ENCODE measurements at regions of chr7 and their contacts with region 1.

Region 1: GRCh38 chr7:66905689-66906088 is 15.3 kb upstream of the TMEM248 start:
- DNase-seq: peak in 1 of 2 experiments; percentile 56
- H3K4me3 ChIP-seq: no peak overlapping the region
- H3K27ac ChIP-seq: peak overlapping the region; percentile 5; the same call in 1 of the 2 replicates
- H3K4me1 ChIP-seq: no peaks in the 10 kb centered on the region
- H3K27me3 ChIP-seq: no peaks in the 10 kb centered on the region
- CTCF ChIP-seq: peak; percentile 45 to 68 (median 59)
- EP300 ChIP-seq: no peak
- POLR2A ChIP-seq: no peak
- RAD21 ChIP-seq: peak; percentile 49 to 51

Region 2: DNA sequence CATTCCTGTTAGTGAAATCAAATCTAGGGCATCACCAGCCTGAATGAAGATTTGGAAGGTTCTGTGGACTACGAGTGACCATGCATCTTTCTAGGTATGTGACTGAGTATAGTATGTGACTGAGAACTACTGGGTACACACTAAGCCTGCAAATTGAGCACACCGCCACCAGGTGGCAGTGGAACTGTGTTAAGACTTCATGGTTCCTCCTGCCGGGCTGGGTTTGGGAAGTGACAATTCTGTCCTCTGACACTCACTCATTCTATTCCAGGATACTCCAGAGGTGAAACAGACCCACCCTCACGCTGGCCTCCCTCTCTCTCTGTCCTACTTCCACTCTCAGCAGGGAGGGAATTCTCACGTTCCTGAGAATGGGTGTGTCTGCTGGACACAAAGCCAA is 68.7 kb before region 1 on chr7:
- CTCF ChIA-PET with region 1: interaction called, 55 read pairs
- POLR2A ChIA-PET with region 1: no interaction called
- DNase-seq: peak; percentile 50 to 79
- H3K4me3 ChIP-seq: no peak overlapping the region
- H3K27ac ChIP-seq: no peak overlapping the region
- H3K4me1 ChIP-seq: no peaks in the 10 kb centered on the region
- H3K27me3 ChIP-seq: no peaks in the 10 kb centered on the region
- CTCF ChIP-seq: peak; percentile 64 to 84 (median 72)
- EP300 ChIP-seq: no peak
- POLR2A ChIP-seq: no peak
- RAD21 ChIP-seq: peak; percentile 81 to 82

Region 3: DNA sequence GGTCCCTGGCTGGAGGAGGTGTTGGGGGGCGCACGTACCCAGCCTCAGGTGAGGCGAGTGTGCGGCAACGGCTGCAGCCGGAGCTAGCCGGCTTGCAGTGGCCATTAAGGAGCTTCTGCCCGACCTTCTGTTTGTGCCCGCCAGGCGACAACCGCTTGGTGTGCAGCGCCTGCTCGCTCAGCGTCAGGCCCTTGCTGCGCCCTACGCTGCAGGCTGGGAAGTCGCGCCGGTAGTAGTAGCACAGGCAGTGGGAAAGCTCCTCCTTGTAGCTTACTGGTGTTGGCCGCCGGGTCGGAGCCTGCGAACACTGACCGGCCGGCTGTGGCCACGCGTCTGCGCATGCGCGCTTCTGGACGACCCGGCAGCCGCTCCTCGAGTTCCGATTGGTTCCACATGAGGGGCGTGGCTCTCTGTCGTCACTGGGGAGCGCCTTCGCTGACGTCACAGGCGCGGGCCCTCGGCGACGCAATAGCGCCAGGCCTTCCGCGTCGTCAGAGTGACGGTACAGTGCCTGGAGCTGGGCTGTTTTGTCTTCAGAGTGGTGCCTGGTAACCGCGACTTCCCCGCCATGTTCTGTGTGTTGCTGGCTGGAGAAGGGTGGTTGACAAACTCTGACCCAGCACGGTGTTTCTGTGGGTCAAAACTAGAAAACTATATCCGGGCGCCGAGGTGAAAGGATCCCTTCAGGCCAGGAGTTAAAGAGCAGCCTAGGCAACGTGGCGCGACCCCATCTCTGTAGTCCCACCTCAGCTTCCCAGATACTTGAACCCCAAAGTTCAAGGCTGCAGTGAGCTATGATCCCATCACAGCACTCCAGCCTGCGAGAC is 60.9 kb before region 1 on chr7:
- CTCF ChIA-PET with region 1: interaction called, 23 read pairs
- POLR2A ChIA-PET with region 1: interaction called, 16 read pairs
- DNase-seq: peak; percentile 95 to 100
- H3K4me3 ChIP-seq: peak overlapping the region; percentile 73 to 94 (median 83)
- H3K27ac ChIP-seq: peak overlapping the region; percentile 97
- H3K4me1 ChIP-seq: peaks cover 2 to 26% (median 11%) of the 10 kb centered on the region in 4 experiments; a peak in 6 of 7 replicates
- H3K27me3 ChIP-seq: no peaks in the 10 kb centered on the region
- CTCF ChIP-seq: peak in 1 of 3 experiments; percentile 17; a peak in 1 of 4 replicates
- EP300 ChIP-seq: peak in 1 of 2 experiments; percentile 82; a peak in 1 of 3 replicates
- POLR2A ChIP-seq: peak; percentile 85 to 96
- RAD21 ChIP-seq: peak in 1 of 2 experiments; percentile 4; a peak in 2 of 4 replicates

Measured in H1 (cell line).